CD8-positive, alpha-beta T cell (primary cell): ENCODE measurements at regions of chr18 and their contacts with region 1.

Region 1: DNA sequence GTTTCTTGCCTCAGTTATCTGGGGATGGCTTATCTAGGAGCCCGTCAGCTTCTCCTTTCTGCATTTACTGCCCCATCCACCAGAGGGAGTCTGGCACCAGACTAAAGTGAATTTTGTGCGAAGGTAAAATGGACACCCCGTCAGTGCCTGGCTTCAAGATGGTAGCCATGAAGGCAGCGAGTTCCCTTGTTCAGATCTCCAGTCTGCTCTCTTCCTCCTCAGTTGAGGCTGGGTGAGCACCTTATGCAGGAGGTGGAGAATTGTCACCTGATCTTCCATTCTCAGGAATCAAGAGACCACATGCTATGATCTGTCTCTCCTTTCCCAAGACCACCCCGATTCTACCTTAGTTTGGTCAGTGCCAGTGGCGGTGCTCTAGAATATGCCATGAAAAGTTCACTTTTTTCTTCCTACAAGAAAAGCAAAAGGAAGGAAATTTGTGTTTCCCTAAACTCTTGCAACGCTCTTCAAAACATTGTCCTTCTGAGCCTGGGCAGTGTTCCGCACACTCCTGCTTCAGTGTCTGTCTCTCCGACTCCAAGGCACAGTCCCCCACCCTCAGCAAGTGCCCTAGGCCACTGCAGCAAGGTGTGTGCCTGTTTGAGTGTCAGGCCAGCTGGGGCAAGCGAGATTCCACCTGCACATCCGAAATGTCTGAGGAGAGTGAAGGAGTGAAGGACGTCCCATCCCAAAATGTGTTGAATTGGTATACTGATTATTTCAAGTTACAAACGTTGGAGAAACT is 168.6 kb downstream of the SS18 start:
- DNase-seq: peak in 6 of 9 experiments; percentile 1 to 58 (median 36)
- ATAC-seq: no peak
- H3K4me3 ChIP-seq: no peak overlapping the region
- H3K4me3 Mint-ChIP-seq: no peak overlapping the region
- H3K27ac ChIP-seq: no peak overlapping the region
- H3K27ac Mint-ChIP-seq: no peak overlapping the region
- H3K4me1 ChIP-seq: no peaks in the 10 kb centered on the region
- H3K4me1 Mint-ChIP-seq: no peaks in the 10 kb centered on the region
- H3K27me3 ChIP-seq: no peaks in the 10 kb centered on the region
- H3K27me3 Mint-ChIP-seq: no peaks in the 10 kb centered on the region
- CTCF ChIP-seq: peak; percentile 44

Region 2: GRCh38 chr18:25935356-25935755 is 13.5 kb after region 1 on chr18:
- CTCF ChIA-PET with region 1: no interaction called
- POLR2A ChIA-PET with region 1: no interaction called
- intact Hi-C with region 1: no loop called
- DNase-seq: no peak
- ATAC-seq: no peak
- H3K4me3 ChIP-seq: no peak overlapping the region
- H3K4me3 Mint-ChIP-seq: no peak overlapping the region
- H3K27ac ChIP-seq: no peak overlapping the region
- H3K27ac Mint-ChIP-seq: no peak overlapping the region
- H3K4me1 ChIP-seq: no peaks in the 10 kb centered on the region
- H3K4me1 Mint-ChIP-seq: no peaks in the 10 kb centered on the region
- H3K27me3 ChIP-seq: no peaks in the 10 kb centered on the region
- H3K27me3 Mint-ChIP-seq: peaks cover 13% of the 10 kb centered on the region
- CTCF ChIP-seq: no peak

Region 3: GRCh38 chr18:26159353-26159752 is 237.5 kb after region 1 on chr18:
- CTCF ChIA-PET with region 1: interaction called, 4 read pairs
- POLR2A ChIA-PET with region 1: no interaction called
- intact Hi-C with region 1: loop called (anchors 2 kb)
- DNase-seq: peak in 2 of 9 experiments; percentile 29 to 41
- ATAC-seq: no peak
- H3K4me3 ChIP-seq: no peak overlapping the region
- H3K4me3 Mint-ChIP-seq: no peak overlapping the region
- H3K27ac ChIP-seq: no peak overlapping the region
- H3K27ac Mint-ChIP-seq: no peak overlapping the region
- H3K4me1 ChIP-seq: no peaks in the 10 kb centered on the region
- H3K4me1 Mint-ChIP-seq: peaks cover 6% of the 10 kb centered on the region
- H3K27me3 ChIP-seq: no peaks in the 10 kb centered on the region
- H3K27me3 Mint-ChIP-seq: no peaks in the 10 kb centered on the region
- CTCF ChIP-seq: peak; percentile 57

Region 4: DNA sequence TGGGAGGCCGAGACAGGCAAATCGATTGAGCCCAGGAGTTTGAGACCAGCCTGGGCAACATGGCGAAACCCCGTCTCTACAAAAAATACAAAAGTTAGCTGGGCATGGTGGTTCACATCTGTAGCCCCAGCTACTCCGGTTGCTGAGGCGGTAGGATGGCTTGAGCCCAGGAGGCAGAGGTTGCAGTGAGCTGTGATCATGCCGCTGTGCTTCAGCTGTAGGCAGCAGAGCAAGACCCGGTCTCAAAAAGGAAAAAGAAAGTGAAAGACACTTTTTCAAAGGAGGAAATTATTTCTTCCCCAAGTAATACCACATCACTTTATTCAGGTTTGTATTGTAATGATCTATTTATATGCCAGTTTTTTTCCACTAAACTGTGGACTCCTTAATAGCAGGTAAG is 268.7 kb after region 1 on chr18:
- CTCF ChIA-PET with region 1: no interaction called
- POLR2A ChIA-PET with region 1: no interaction called
- intact Hi-C with region 1: no loop called
- DNase-seq: peak in 8 of 9 experiments; percentile 2 to 69 (median 37)
- ATAC-seq: peak; percentile 90
- H3K4me3 ChIP-seq: peak overlapping the region; percentile 24 to 40
- H3K4me3 Mint-ChIP-seq: peak overlapping the region; percentile 81
- H3K27ac ChIP-seq: peak overlapping the region; percentile 35 to 52
- H3K27ac Mint-ChIP-seq: peak overlapping the region; percentile 89
- H3K4me1 ChIP-seq: peaks cover 4% of the 10 kb centered on the region
- H3K4me1 Mint-ChIP-seq: peaks cover 25% of the 10 kb centered on the region
- H3K27me3 ChIP-seq: no peaks in the 10 kb centered on the region
- H3K27me3 Mint-ChIP-seq: no peaks in the 10 kb centered on the region
- CTCF ChIP-seq: no peak

Region 5: DNA sequence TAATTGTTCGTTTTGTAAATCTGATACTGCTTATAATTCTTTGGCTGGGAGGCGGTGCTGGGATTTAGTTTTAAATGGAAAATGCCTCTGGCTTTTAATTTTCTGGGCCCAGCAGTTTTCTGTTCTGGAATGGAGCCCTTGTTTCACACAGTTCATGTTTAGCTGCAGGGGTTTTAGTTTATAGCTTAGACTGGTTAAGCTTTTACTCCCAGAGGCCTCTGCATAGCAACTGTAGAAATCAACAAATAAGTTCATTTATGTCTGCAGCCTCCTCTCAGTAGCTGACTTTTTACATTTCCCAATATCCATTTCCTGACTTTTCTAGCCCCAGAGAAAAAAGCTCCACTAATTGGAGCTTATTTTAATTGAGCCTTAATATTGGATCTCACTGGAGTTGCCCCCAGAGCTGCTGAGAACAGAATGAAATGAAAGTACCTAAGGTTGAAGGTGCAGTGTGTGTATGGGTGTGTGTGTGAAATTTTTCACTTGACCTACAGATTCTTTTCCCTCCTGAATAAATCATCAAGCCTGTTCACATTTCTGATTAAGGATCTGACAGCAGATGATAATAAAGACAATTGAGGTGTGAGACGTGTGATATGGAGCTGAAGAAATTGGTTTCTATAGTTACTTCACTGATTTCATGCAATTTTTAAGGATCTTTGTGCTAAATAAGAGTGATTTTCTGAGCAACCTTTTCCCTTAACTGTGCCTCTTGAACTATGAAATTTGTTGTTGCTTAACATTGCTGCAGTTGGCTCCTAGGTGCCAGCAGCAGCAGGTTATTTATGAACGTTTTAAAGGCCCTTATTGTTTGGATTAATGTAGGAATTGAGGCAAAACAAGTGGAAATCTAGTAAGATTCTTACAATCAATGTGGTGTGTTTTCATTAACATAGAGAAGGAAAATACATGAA is 414.0 kb after region 1 on chr18:
- CTCF ChIA-PET with region 1: no interaction called
- POLR2A ChIA-PET with region 1: no interaction called
- intact Hi-C with region 1: loop called in 1 of 2 experiments (anchors 2 kb)
- DNase-seq: no peak
- ATAC-seq: no peak
- H3K4me3 ChIP-seq: no peak overlapping the region
- H3K4me3 Mint-ChIP-seq: no peak overlapping the region
- H3K27ac ChIP-seq: no peak overlapping the region
- H3K27ac Mint-ChIP-seq: no peak overlapping the region
- H3K4me1 ChIP-seq: no peaks in the 10 kb centered on the region
- H3K4me1 Mint-ChIP-seq: peaks cover 5% of the 10 kb centered on the region
- H3K27me3 ChIP-seq: no peaks in the 10 kb centered on the region
- H3K27me3 Mint-ChIP-seq: no peaks in the 10 kb centered on the region
- CTCF ChIP-seq: no peak

Region 6: DNA sequence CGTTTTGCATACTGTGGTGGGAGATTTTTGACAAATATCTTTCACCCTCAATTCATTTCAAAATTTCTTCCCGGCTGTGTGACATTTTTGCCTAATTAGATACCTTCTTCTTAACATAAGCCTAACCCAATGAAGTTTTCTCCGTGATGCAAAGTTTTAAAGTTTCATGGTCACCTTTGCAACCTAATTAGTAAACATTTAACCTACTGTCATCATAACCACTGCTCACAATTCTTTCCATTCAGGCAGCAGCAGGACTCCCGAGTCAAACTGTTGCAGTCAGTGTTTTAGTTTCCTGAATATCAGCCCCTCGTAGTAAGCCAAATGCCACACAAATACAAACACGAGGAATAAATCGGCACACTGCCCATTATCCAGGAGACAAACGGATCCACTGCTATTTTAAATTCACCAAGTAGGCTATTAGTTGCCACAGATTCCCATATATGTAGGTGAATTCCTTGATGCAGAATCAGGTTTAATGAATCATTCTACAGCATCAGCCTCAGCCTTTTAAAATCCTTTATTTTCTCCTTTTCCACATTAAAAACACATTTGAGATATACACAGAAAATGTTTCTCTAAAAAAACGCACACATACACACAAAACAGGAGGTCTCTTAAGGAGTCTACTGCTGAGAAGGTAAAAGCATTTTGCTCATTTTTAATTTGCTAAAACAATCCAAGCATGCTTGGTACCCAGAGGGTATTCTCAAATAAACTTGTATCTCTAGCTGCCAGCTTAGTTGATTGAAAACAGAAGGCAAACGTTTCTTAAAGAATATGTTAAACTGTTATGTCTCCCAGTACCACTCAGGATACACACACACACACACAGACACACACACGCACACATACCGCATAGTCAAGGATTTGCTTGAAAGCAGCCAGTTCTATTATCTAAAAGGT is 733.0 kb after region 1 on chr18:
- CTCF ChIA-PET with region 1: no interaction called
- POLR2A ChIA-PET with region 1: no interaction called
- intact Hi-C with region 1: loop called in 1 of 2 experiments (anchors 5 kb)
- DNase-seq: no peak
- ATAC-seq: no peak
- H3K4me3 ChIP-seq: no peak overlapping the region
- H3K4me3 Mint-ChIP-seq: peak overlapping the region; percentile 46
- H3K27ac ChIP-seq: no peak overlapping the region
- H3K27ac Mint-ChIP-seq: no peak overlapping the region
- H3K4me1 ChIP-seq: no peaks in the 10 kb centered on the region
- H3K4me1 Mint-ChIP-seq: peaks cover 16% of the 10 kb centered on the region
- H3K27me3 ChIP-seq: peaks cover 4 to 10% of the 10 kb centered on the region in 2 experiments
- H3K27me3 Mint-ChIP-seq: peaks cover 73% of the 10 kb centered on the region
- CTCF ChIP-seq: no peak